ENCODE measurements at regions of chr12 and their contacts with region 1.

Region 1: GRCh38 chr12:27534060-27534764 is 10.2 kb downstream of the PPFIBP1 start:
- DNase-seq: peak; percentile 71
- H3K4me3 Mint-ChIP-seq: peak overlapping the region; percentile 7
- H3K27ac Mint-ChIP-seq: peak overlapping the region; percentile 71
- H3K4me1 Mint-ChIP-seq: peaks cover 50% of the 10 kb centered on the region
- H3K27me3 Mint-ChIP-seq: no peaks in the 10 kb centered on the region

Region 2: GRCh38 chr12:27434673-27435565 is 99.3 kb before region 1 on chr12:
- CTCF ChIA-PET with region 1: interaction called, 4 read pairs
- intact Hi-C with region 1: loop called (anchors 1 kb)
- DNase-seq: peak; percentile 37
- H3K4me3 Mint-ChIP-seq: no peak overlapping the region
- H3K27ac Mint-ChIP-seq: no peak overlapping the region
- H3K4me1 Mint-ChIP-seq: peaks cover 17% of the 10 kb centered on the region
- H3K27me3 Mint-ChIP-seq: peaks cover 2% of the 10 kb centered on the region

Region 3: GRCh38 chr12:27474344-27474743 is 59.9 kb before region 1 on chr12:
- CTCF ChIA-PET with region 1: no interaction called
- intact Hi-C with region 1: no loop called
- DNase-seq: no peak
- H3K4me3 Mint-ChIP-seq: no peak overlapping the region
- H3K27ac Mint-ChIP-seq: no peak overlapping the region
- H3K4me1 Mint-ChIP-seq: peaks cover 15% of the 10 kb centered on the region
- H3K27me3 Mint-ChIP-seq: no peaks in the 10 kb centered on the region

Region 4: DNA sequence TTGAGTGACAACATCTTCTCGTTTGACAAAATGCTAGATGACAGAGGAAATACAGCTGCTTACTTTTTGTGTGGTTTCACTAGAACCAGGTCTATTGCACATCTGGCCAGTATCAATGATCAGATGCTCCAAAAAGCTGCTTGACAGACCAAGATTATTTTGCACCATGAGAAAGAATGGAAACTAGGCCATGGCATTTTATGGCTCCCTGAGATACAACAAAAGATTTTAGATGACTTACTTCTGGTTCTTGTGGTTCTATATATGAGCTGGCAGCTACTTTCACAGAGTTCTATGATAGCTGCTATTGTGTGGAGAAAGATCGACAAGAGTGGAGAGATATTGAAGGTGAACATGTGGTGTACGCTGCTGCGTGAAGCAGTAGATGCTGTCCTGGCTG is 36.1 kb before region 1 on chr12:
- CTCF ChIA-PET with region 1: no interaction called
- intact Hi-C with region 1: loop called (anchors 1 kb)
- DNase-seq: no peak
- H3K4me3 Mint-ChIP-seq: no peak overlapping the region
- H3K27ac Mint-ChIP-seq: peak overlapping the region; percentile 11
- H3K4me1 Mint-ChIP-seq: peaks cover 27% of the 10 kb centered on the region
- H3K27me3 Mint-ChIP-seq: peaks cover 18% of the 10 kb centered on the region

Region 5: DNA sequence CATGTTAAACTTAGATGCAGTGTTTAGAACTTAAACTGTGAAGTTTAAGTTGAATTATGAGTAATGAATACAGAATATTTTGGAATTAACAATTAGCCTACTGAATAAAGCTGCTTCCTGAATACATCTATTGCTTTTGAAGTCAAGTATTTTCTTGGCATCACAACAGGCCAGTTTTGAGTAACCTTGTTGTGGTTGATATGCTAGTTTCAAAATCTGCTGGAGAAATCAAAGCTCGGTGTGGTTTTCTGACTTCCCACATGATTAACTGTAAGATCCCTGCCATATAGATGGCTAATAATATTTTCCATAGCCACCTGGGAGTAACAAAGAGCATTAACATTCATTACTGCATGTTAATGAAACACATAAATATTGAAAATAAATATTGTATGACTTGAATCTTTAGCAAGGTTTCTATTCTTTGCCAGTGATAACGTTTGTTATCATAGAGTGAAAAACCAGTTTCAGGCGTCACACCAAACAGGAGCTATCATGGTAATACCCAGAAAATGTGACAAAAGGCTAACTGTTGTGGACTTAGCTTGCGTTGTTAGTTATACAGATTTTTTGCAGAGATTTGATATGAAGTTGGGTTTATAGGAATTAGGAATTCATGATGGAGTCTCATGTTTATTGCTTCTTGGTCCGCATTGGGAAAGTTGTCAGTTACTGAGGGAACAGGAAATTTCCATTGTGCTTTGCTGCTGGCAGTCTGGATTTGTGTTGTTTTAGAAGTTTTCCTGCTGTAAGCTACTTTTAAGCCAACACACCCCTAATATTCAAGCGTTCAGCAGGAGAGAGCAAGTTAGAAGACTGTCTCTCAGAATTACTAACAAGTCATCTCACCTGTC is 21.9 kb after region 1 on chr12:
- CTCF ChIA-PET with region 1: interaction called, 5 read pairs
- intact Hi-C with region 1: loop called (anchors 1 kb)
- DNase-seq: no peak
- H3K4me3 Mint-ChIP-seq: no peak overlapping the region
- H3K27ac Mint-ChIP-seq: no peak overlapping the region
- H3K4me1 Mint-ChIP-seq: peaks cover 23% of the 10 kb centered on the region
- H3K27me3 Mint-ChIP-seq: peaks cover 5% of the 10 kb centered on the region

Region 6: DNA sequence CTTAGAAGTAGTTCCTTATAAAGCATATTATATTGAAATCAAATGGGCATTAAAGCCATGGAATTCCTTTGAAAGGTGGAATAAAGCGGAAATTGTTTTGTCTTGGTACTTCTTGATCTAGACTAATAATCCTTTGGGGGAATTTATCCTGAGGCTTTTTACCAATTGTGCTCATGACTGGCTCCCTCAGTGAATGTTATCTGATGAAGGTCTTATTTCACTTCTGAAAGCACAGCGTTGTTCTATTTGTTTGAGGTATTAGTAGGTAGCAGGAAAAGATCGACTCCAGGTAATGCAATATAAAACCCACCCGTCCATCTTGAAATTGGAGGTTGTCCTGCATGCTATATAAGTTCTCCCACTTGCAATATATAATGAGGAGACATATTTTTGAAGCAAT is 54.6 kb after region 1 on chr12:
- CTCF ChIA-PET with region 1: no interaction called
- intact Hi-C with region 1: loop called (anchors 2 kb)
- DNase-seq: no peak
- H3K4me3 Mint-ChIP-seq: no peak overlapping the region
- H3K27ac Mint-ChIP-seq: no peak overlapping the region
- H3K4me1 Mint-ChIP-seq: peaks cover 17% of the 10 kb centered on the region
- H3K27me3 Mint-ChIP-seq: no peaks in the 10 kb centered on the region

Region 7: GRCh38 chr12:27619308-27619707 is 85.1 kb after region 1 on chr12:
- CTCF ChIA-PET with region 1: interaction called, 5 read pairs
- intact Hi-C with region 1: loop called (anchors 5 kb)
- DNase-seq: peak; percentile 20
- H3K4me3 Mint-ChIP-seq: no peak overlapping the region
- H3K27ac Mint-ChIP-seq: no peak overlapping the region
- H3K4me1 Mint-ChIP-seq: peaks cover 18% of the 10 kb centered on the region
- H3K27me3 Mint-ChIP-seq: no peaks in the 10 kb centered on the region

Region 8: DNA sequence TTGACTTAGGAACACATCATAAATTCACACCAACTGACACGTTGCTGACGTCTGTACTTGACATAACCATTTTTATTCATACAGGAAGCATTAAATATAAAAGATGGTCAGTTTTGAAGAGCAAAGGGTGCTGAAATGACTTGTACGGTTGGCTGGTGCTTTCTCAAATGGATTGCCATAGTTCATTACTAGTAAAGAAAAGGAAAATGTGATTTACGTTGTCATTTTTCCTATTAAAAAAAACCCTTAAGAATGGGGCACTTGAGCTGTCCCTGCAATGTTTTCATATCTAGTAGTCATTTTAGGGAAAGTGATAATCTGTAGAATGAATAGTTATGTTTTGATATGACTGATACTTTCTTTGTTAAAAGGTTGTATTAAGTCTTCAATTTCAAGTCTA is 268.3 kb after region 1 on chr12:
- CTCF ChIA-PET with region 1: no interaction called
- intact Hi-C with region 1: loop called (anchors 1 kb)
- DNase-seq: peak; percentile 49
- H3K4me3 Mint-ChIP-seq: no peak overlapping the region
- H3K27ac Mint-ChIP-seq: peak overlapping the region; percentile 85
- H3K4me1 Mint-ChIP-seq: peaks cover 59% of the 10 kb centered on the region
- H3K27me3 Mint-ChIP-seq: peaks cover 4% of the 10 kb centered on the region

Measured in activated naive CD4-positive, alpha-beta T cell treated with anti-CD3 and anti-CD28 coated beads for 36 hours (primary cell).